Natural killer cell (primary cell): ENCODE measurements at regions of chr7 and their contacts with region 1.

Region 1: DNA sequence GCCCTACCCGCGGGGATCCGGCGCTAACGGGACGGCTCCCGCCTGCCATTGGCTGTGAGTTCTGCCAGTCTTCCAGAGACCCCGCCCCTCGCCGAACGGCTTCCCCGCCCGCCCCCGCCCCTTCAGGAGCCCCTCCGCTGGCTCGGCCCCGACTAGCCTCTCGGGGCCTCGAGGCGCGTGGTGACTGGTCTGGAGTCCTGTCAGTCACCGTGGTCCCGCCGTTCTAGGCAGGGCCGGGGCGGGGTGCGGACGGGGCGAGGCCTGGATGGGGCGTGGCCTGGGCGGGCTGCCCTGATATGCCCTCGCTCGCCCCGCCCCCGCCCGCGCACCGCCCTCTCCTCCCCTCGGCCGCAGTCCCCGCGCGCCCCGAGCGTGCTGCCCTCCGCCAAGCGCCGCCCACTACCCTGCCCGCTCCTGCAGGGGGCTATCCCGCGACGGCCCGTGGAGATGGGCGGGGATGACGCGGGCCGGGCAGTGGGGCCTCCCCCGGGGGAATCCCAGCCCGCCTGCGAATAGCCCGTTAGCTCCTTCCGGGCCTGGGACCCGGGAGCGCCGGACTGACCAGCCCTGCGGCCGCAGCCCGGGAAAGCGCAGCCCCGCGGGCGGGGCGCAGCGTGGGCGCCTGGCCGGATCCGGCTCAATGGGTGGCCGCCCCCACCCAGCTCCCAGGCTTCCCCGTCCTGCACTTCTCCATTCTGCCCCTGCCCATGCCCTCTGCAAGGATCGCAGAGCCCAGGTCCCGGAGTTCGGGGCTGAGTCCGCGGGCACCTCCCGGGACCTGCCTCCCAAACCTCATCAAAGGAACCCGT is 450 bp upstream of the HIP1 start:
- DNase-seq: peak; percentile 99
- ATAC-seq: peak; percentile 89 to 98 (median 90)
- H3K4me3 ChIP-seq: peak overlapping the region; percentile 96
- H3K4me3 Mint-ChIP-seq: peak overlapping the region; percentile 100
- H3K27ac ChIP-seq: peak overlapping the region; percentile 83
- H3K27ac Mint-ChIP-seq: peak overlapping the region; percentile 95 to 97
- H3K4me1 ChIP-seq: peaks cover 24% of the 10 kb centered on the region
- H3K4me1 Mint-ChIP-seq: peaks cover 28 to 32% of the 10 kb centered on the region in 2 donors
- H3K27me3 ChIP-seq: no peaks in the 10 kb centered on the region
- H3K27me3 Mint-ChIP-seq: peaks cover 3 to 19% of the 10 kb centered on the region in 2 donors
- CTCF ChIP-seq: no peak

Region 2: GRCh38 chr7:75617634-75618234 is 121.5 kb before region 1 on chr7:
- intact Hi-C with region 1: loop called (anchors 5 kb)
- DNase-seq: peak; percentile 67 to 75
- ATAC-seq: peak; percentile 89 to 92 (median 89)
- H3K4me3 ChIP-seq: no peak overlapping the region
- H3K4me3 Mint-ChIP-seq: peak overlapping the region; percentile 81
- H3K27ac ChIP-seq: peak overlapping the region; percentile 29
- H3K27ac Mint-ChIP-seq: peak overlapping the region; percentile 80 to 89
- H3K4me1 ChIP-seq: peaks cover 59% of the 10 kb centered on the region
- H3K4me1 Mint-ChIP-seq: peaks cover 46 to 57% of the 10 kb centered on the region in 2 donors
- H3K27me3 ChIP-seq: no peaks in the 10 kb centered on the region
- H3K27me3 Mint-ChIP-seq: no peaks in the 10 kb centered on the region
- CTCF ChIP-seq: no peak

Region 3: GRCh38 chr7:75679060-75679459 is 60.1 kb before region 1 on chr7:
- intact Hi-C with region 1: no loop called
- DNase-seq: no peak
- ATAC-seq: no peak
- H3K4me3 ChIP-seq: no peak overlapping the region
- H3K4me3 Mint-ChIP-seq: no peak overlapping the region
- H3K27ac ChIP-seq: no peak overlapping the region
- H3K27ac Mint-ChIP-seq: no peak overlapping the region
- H3K4me1 ChIP-seq: no peaks in the 10 kb centered on the region
- H3K4me1 Mint-ChIP-seq: peaks cover 0 to 10% of the 10 kb centered on the region in 2 donors
- H3K27me3 ChIP-seq: no peaks in the 10 kb centered on the region
- H3K27me3 Mint-ChIP-seq: no peaks in the 10 kb centered on the region
- CTCF ChIP-seq: no peak

Region 4: GRCh38 chr7:75727881-75728592 is 11.2 kb before region 1 on chr7:
- intact Hi-C with region 1: loop called (anchors 1 kb)
- DNase-seq: peak; percentile 45 to 84
- ATAC-seq: peak; percentile 80 to 92 (median 89)
- H3K4me3 ChIP-seq: no peak overlapping the region
- H3K4me3 Mint-ChIP-seq: peak overlapping the region; percentile 78
- H3K27ac ChIP-seq: peak overlapping the region; percentile 70
- H3K27ac Mint-ChIP-seq: peak overlapping the region; percentile 72 to 92
- H3K4me1 ChIP-seq: peaks cover 92% of the 10 kb centered on the region
- H3K4me1 Mint-ChIP-seq: peaks cover 53 to 55% of the 10 kb centered on the region in 2 donors
- H3K27me3 ChIP-seq: no peaks in the 10 kb centered on the region
- H3K27me3 Mint-ChIP-seq: peaks cover 0 to 2% of the 10 kb centered on the region in 2 donors
- CTCF ChIP-seq: no peak

Region 5: DNA sequence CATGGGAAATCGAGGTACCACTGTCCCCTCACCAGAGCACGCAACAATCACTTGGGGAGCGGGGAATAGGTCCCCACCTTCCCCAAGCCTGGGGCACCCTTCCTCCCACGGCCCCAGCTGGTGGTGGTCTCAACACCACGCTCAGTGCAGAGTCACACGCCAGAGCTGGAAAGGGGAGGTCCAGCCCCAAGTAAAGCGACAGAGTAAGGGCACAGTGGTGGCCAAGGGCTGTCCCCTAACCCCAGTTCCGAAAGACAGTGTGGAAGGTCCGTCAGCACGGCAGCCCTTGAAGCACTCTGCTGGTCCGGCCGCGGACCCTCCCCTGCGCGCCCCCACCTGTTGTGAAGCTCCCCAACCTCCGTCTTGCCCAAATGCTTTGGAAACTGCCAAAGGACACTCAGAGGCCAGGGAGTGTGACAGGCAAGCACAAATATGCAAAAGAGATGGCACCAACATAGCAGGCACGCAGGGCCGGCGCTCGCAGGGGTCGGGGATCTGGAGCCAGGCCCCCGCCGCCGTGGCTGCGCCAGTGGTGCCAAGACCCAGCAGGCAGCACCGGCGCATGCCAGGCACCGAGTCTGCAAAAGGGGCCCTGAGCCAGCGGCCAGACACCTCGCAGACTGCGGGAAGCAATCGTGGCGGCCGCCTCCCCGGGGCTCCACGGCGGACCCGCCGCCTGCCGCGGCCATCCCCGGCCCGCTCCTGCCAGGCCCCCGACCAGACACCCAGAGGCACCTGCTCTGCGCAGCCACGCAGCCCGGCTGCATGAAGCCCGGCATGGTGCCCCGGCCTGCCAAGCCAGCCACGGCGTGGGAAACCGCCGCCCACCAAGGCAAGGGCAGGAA is 410.9 kb after region 1 on chr7:
- intact Hi-C with region 1: no loop called
- DNase-seq: peak in 1 of 2 donors; percentile 28
- ATAC-seq: peak; percentile 58 to 70 (median 66)
- H3K4me3 ChIP-seq: no peak overlapping the region
- H3K4me3 Mint-ChIP-seq: peak overlapping the region; percentile 42
- H3K27ac ChIP-seq: no peak overlapping the region
- H3K27ac Mint-ChIP-seq: peak overlapping the region in 1 of 2 donors; percentile 47
- H3K4me1 ChIP-seq: peaks cover 37% of the 10 kb centered on the region
- H3K4me1 Mint-ChIP-seq: peaks cover 27 to 36% of the 10 kb centered on the region in 2 donors
- H3K27me3 ChIP-seq: no peaks in the 10 kb centered on the region
- H3K27me3 Mint-ChIP-seq: no peaks in the 10 kb centered on the region
- CTCF ChIP-seq: no peak